Activated CD8-positive, alpha-beta T cell treated with anti-CD3 and anti-CD28 coated beads, Interleukin-2, amount 10 ng/mL, durations not matched to agents 7 days and 5 days (primary cell): ENCODE measurements at regions of chr1 and their contacts with region 1.

Region 1: GRCh38 chr1:117067533-117068370 is 7.6 kb downstream of the TTF2 start:
- DNase-seq: peak; percentile 58
- ATAC-seq: peak; percentile 80
- H3K4me3 Mint-ChIP-seq: no peak overlapping the region
- H3K27ac Mint-ChIP-seq: no peak overlapping the region
- H3K4me1 Mint-ChIP-seq: peaks cover 39% of the 10 kb centered on the region
- H3K27me3 Mint-ChIP-seq: no peaks in the 10 kb centered on the region

Region 2: DNA sequence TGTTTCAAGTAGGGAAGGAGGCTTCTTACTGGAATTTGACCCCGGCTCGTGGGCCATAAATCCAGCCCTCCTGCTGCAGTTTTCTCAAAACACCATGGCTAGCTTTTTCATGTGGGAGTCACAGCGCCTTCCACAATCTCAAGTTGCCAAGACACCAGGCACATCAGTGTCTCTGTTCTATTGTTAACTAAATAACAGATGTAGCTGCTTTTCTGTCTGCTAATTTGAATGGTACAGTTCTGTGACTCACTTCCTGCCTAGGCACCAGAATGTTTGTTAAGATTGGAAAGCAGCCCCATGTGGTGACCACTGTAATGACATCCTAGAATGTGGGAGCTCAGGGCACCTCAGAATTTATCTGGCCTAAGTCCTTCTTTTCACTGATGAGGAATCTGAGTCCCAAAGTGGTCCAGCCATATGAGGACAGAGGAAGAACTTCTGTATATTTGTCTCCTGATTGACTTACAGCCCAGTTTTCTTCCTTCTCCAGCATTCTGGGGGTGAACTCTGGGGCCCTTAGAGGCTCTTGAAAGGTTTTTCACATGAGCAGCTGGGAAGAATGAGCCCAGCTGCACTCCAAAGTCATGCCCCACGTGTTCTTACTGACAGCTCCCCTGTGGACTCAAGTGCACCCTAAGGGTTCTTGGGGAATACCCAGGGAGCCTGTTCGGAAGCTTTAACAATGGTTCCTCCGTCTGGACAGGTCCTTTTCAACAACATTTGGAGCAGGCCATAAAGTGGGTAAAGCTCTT is 26.3 kb after region 1 on chr1:
- CTCF ChIA-PET with region 1: interaction called, 67 read pairs
- POLR2A ChIA-PET with region 1: no interaction called
- DNase-seq: peak; percentile 65
- ATAC-seq: peak; percentile 92
- H3K4me3 Mint-ChIP-seq: no peak overlapping the region
- H3K27ac Mint-ChIP-seq: peak overlapping the region; percentile 50
- H3K4me1 Mint-ChIP-seq: peaks cover 16% of the 10 kb centered on the region
- H3K27me3 Mint-ChIP-seq: no peaks in the 10 kb centered on the region

Region 3: DNA sequence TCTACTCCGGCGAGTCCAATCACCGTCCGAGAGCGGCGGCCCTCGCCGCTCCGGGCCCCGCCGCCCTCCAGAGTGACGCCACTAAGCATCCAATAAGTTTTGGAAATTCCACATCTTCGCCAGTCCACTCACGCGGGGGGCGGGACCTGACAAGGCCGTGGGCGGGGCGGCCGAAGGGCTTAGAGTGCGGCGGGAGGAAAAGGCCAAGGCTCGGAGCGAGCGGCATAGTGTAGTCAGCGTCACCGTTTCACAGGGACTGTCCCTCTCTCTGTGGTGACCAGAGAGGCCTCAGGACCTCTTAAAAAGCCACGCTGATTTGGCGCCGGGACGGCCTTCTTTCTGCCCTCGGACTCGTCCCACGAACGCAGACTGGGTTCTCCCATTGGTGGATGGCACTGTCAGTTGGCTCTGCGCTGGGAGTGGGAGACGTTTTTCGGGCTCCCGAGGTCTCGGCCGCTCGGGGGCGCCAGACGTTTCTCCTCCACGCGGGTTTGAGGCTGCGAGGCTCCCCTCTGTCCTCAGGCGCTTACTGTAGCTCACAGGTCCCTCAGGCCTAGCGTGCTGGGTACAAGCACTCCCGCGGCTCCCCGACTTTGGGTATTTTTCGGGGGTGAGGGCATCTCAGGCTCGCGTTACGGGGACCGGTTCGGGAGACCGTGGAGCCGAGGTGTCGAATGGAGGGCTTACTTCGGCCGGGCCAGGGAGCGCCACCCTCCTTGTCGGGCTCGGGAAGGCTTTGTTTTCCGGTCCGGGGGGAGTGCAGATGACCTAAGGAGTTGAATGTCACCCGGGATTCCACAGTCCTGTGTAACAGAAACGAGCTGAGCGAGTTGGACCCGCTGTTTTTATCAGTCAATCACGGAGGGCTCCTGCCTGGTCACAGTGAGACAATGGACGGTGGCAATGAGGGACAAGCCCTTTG is 54.3 kb after region 1 on chr1:
- CTCF ChIA-PET with region 1: interaction called, 46 read pairs
- POLR2A ChIA-PET with region 1: no interaction called
- DNase-seq: peak; percentile 84
- ATAC-seq: peak; percentile 87
- H3K4me3 Mint-ChIP-seq: peak overlapping the region; percentile 75
- H3K27ac Mint-ChIP-seq: peak overlapping the region; percentile 21
- H3K4me1 Mint-ChIP-seq: peaks cover 6% of the 10 kb centered on the region
- H3K27me3 Mint-ChIP-seq: peaks cover 19% of the 10 kb centered on the region